BJ (cell line): ENCODE measurements at regions of chr19 and their contacts with region 1.

Region 1: DNA sequence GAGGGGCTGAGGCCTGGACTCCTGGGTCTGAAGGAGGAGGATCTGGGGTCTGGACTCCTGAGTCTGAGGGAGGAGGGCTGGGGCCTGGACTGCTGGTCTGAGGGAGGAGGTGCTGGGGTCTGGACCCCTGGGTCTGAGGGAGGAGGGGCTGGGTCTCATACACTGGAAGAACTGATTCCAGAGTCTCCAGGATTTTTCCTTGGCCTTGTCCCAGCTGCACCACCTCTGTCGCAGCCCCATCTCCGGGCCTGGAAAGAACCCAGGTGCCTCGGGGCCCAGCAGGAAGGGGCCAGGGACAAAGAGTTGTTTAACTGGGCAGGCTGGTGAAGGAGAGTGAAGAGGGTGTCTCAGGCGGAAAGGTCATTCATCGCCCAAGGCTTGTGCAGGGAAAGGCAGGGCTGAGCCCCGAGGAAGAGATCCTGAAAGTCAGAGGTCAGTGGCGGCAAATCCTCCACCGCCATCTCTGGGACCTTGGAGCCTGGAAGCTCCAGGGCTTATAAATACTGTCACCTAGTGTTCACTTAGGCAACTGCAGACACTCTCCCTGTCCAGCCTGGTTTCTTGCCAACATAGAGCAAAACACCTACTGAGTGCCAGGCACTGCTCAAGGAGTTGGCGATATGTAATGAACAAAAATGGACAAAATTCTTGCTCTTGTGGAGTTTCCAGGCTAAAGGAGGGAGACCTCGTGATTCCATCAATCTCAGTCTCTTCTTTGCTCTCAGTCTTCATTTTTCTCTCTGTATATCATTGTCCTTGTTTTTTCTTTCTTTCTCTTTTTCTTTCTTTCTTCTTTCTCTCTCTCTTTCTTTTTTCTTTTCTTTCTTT is 4.4 kb upstream of the KCNN4 start:
- DNase-seq: no peak
- H3K4me3 ChIP-seq: no peak overlapping the region
- H3K27me3 ChIP-seq: no peaks in the 10 kb centered on the region
- CTCF ChIP-seq: peak; percentile 100

Region 2: GRCh38 chr19:43765109-43765876 is 19.9 kb before region 1 on chr19:
- CTCF ChIA-PET with region 1: interaction called, 11 read pairs
- POLR2A ChIA-PET with region 1: no interaction called
- DNase-seq: peak; percentile 92
- H3K4me3 ChIP-seq: no peak overlapping the region
- H3K27me3 ChIP-seq: no peaks in the 10 kb centered on the region
- CTCF ChIP-seq: no peak

Region 3: GRCh38 chr19:43774103-43774939 is 10.9 kb before region 1 on chr19:
- CTCF ChIA-PET with region 1: interaction called, 19 read pairs
- POLR2A ChIA-PET with region 1: no interaction called
- DNase-seq: no peak
- H3K4me3 ChIP-seq: no peak overlapping the region
- H3K27me3 ChIP-seq: peaks cover 2% of the 10 kb centered on the region; the same call in 1 of the 2 replicates
- CTCF ChIP-seq: peak; percentile 85

Region 4: GRCh38 chr19:43872547-43873336 is 87.5 kb after region 1 on chr19:
- CTCF ChIA-PET with region 1: no interaction called
- POLR2A ChIA-PET with region 1: no interaction called
- DNase-seq: no peak
- H3K4me3 ChIP-seq: no peak overlapping the region
- H3K27me3 ChIP-seq: no peaks in the 10 kb centered on the region
- CTCF ChIP-seq: no peak